GM12878 (cell line): ENCODE measurements at regions of chr1 and their contacts with region 1.

Region 1: DNA sequence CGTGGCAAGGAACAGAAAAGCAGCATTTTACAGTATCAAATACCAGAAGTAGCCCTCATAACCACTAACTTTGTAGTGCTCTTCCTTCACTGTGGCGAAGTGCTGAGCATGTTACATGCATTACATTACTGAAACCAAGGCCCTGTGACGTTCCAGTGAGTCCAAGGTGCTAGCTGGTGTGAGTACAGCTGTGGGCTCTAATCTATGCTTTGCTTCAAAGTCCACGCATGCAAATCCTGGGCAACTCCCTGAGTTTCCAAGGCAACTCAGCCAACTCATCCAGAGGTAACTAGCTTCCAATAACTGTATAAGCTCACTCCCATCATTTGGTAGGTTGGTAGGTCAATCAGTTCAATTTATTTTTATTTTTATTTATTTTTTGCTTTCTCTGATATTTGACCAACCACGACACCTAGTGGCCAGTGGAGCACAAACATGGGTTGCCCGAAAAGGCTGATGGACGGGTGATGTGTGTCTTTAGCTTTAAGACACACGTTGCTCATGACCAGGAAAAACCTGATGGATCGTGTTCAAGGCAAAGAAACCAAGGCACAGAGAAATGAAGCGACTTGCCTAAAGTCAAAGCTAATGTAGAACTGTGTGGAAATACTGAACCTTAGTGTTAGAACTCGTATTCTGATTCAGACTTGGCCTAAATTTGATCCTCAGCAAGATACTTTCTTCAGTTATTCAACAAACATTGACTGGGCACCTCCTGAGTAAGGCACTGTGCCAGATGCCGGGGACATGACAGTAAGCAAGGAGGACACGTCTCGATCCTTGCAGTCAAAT is 73.0 kb downstream of the GNG12 start:
- DNase-seq: peak; percentile 90
- ATAC-seq: peak; percentile 98
- H3K4me3 ChIP-seq: no peak overlapping the region
- H3K27ac ChIP-seq: peak overlapping the region; percentile 84
- H3K4me1 ChIP-seq: peaks cover 15% of the 10 kb centered on the region
- H3K27me3 ChIP-seq: peaks cover 0 to 3% of the 10 kb centered on the region in 2 experiments; a peak in 2 of 4 replicates
- CTCF ChIP-seq: peak; percentile 70 to 84 (median 81); a peak in 5 of 6 replicates
- EP300 ChIP-seq: peak; percentile 96 to 99; a peak in 3 of 4 replicates
- POLR2A ChIP-seq: no peak
- RAD21 ChIP-seq: peak; percentile 85

Region 2: GRCh38 chr1:67261680-67262079 is 498.5 kb before region 1 on chr1:
- CTCF ChIA-PET with region 1: no interaction called
- POLR2A ChIA-PET with region 1: no interaction called
- RAD21 ChIA-PET with region 1: no interaction called
- SMC1A ChIA-PET with region 1: no interaction called
- in situ Hi-C with region 1: no loop called
- intact Hi-C with region 1: no loop called
- DNase-seq: no peak
- ATAC-seq: peak; percentile 45; the same call in 1 of the 3 replicates
- H3K4me3 ChIP-seq: no peak overlapping the region
- H3K27ac ChIP-seq: no peak overlapping the region
- H3K4me1 ChIP-seq: no peaks in the 10 kb centered on the region
- H3K27me3 ChIP-seq: no peaks in the 10 kb centered on the region
- CTCF ChIP-seq: peak in 2 of 3 experiments; percentile 17 to 30; a peak in 2 of 6 replicates
- EP300 ChIP-seq: no peak
- POLR2A ChIP-seq: no peak
- RAD21 ChIP-seq: 0 out of 2 replicates have a peak, but pooled peaks have one; percentile 8

Region 3: GRCh38 chr1:67500413-67500959 is 259.7 kb before region 1 on chr1:
- CTCF ChIA-PET with region 1: interaction called, 10 read pairs
- POLR2A ChIA-PET with region 1: no interaction called
- RAD21 ChIA-PET with region 1: interaction called, 10 read pairs
- SMC1A ChIA-PET with region 1: interaction called, 4 read pairs
- in situ Hi-C with region 1: no loop called
- intact Hi-C with region 1: no loop called
- DNase-seq: peak; percentile 55
- ATAC-seq: peak; percentile 100
- H3K4me3 ChIP-seq: no peak overlapping the region
- H3K27ac ChIP-seq: no peak overlapping the region
- H3K4me1 ChIP-seq: peaks cover 3% of the 10 kb centered on the region; the same call in 1 of the 2 replicates
- H3K27me3 ChIP-seq: 0 out of 4 replicates have a peak, but pooled peaks cover 0 to 2% of the 10 kb centered on the region in 2 experiments
- CTCF ChIP-seq: peak; percentile 97 to 99 (median 99); a peak in 5 of 6 replicates
- EP300 ChIP-seq: no peak
- POLR2A ChIP-seq: no peak
- RAD21 ChIP-seq: peak; percentile 100

Region 4: GRCh38 chr1:67608661-67609571 is 151.3 kb before region 1 on chr1:
- CTCF ChIA-PET with region 1: interaction called, 15 read pairs
- POLR2A ChIA-PET with region 1: no interaction called
- RAD21 ChIA-PET with region 1: interaction called, 18 read pairs
- SMC1A ChIA-PET with region 1: interaction called, 7 read pairs
- in situ Hi-C with region 1: no loop called
- intact Hi-C with region 1: no loop called
- DNase-seq: peak; percentile 5
- ATAC-seq: peak; percentile 45
- H3K4me3 ChIP-seq: no peak overlapping the region
- H3K27ac ChIP-seq: no peak overlapping the region
- H3K4me1 ChIP-seq: no peaks in the 10 kb centered on the region
- H3K27me3 ChIP-seq: no peaks in the 10 kb centered on the region
- CTCF ChIP-seq: no peak
- EP300 ChIP-seq: no peak
- POLR2A ChIP-seq: no peak
- RAD21 ChIP-seq: no peak

Region 5: DNA sequence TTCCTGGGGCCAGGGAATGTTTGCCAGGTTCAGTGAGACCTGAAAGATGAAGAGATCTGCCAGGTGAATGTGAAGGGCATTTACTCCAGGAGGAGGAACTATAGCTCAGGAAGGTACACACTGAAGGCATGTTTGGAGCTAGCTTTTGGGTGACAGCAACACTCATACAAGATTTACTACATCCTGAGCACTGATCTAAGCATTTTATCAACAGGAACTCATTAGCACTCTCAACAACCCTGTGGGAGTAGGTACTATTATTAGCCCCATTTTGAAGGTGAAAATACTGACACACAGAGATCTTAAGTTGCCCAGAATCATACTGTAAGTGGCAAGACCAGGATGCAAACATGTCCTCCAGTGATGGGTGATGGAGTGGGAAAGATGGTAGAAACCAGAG is 68.5 kb before region 1 on chr1:
- CTCF ChIA-PET with region 1: interaction called, 107 read pairs
- POLR2A ChIA-PET with region 1: interaction called, 33 read pairs
- RAD21 ChIA-PET with region 1: interaction called, 225 read pairs
- SMC1A ChIA-PET with region 1: interaction called, 197 read pairs
- in situ Hi-C with region 1: no loop called
- intact Hi-C with region 1: loop called (anchors 1 kb)
- DNase-seq: no peak
- ATAC-seq: no peak
- H3K4me3 ChIP-seq: no peak overlapping the region
- H3K27ac ChIP-seq: no peak overlapping the region
- H3K4me1 ChIP-seq: peaks cover 4% of the 10 kb centered on the region; the same call in 1 of the 2 replicates
- H3K27me3 ChIP-seq: no peaks in the 10 kb centered on the region
- CTCF ChIP-seq: no peak
- EP300 ChIP-seq: no peak
- POLR2A ChIP-seq: no peak
- RAD21 ChIP-seq: no peak

Region 6: GRCh38 chr1:67735806-67736627 is 24.2 kb before region 1 on chr1:
- CTCF ChIA-PET with region 1: interaction called, 40 read pairs
- POLR2A ChIA-PET with region 1: interaction called, 5 read pairs
- RAD21 ChIA-PET with region 1: interaction called, 14 read pairs
- SMC1A ChIA-PET with region 1: interaction called, 227 read pairs
- in situ Hi-C with region 1: no loop called
- intact Hi-C with region 1: loop called (anchors 2 kb)
- DNase-seq: peak; percentile 64
- ATAC-seq: peak; percentile 95
- H3K4me3 ChIP-seq: peak overlapping the region; percentile 42
- H3K27ac ChIP-seq: peak overlapping the region; percentile 79
- H3K4me1 ChIP-seq: peaks cover 35% of the 10 kb centered on the region
- H3K27me3 ChIP-seq: no peaks in the 10 kb centered on the region
- CTCF ChIP-seq: no peak
- EP300 ChIP-seq: peak in 1 of 2 experiments; percentile 35; a peak in 2 of 4 replicates
- POLR2A ChIP-seq: peak; percentile 76
- RAD21 ChIP-seq: no peak

Region 7: DNA sequence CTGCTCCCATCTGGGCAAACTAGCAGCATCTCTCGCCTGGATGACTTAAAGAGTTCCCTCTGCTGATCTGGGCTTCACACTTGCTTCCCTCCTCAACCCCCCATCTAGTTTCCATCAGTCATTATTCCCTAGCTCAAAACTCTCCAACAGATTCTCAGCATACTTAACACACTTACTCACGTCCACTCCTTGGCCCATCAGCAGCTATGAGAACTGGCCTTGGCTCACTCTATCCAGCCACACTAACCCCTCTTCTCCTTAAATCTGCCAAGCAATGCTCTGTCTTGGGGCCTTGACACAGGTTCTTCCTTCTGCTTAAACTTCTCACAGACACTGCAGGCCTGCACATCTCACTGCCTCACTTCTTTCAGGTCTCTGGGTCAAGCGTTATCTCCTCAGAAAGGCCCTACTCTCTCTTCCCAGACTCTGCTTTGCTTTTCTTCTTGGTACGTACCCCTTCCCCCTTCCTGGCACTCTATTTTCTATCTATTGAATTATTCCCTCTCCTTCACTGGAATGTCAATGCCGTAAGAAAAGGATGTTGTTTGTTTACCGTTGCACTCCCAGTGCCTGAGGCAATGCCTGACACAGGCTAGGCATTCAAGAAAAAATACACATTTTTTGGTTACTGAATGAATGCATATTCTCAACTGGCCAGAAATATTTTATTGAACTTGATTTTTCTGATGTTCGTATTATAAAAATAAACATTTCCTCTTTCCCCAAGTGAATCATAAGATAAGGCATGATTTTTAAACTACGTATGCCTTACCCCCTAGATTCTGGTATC is 31.7 kb after region 1 on chr1:
- CTCF ChIA-PET with region 1: interaction called, 16 read pairs
- POLR2A ChIA-PET with region 1: interaction called, 6 read pairs
- RAD21 ChIA-PET with region 1: interaction called, 73 read pairs
- SMC1A ChIA-PET with region 1: interaction called, 232 read pairs
- in situ Hi-C with region 1: no loop called
- intact Hi-C with region 1: no loop called
- DNase-seq: no peak
- ATAC-seq: no peak
- H3K4me3 ChIP-seq: no peak overlapping the region
- H3K27ac ChIP-seq: no peak overlapping the region
- H3K4me1 ChIP-seq: no peaks in the 10 kb centered on the region
- H3K27me3 ChIP-seq: no peaks in the 10 kb centered on the region; a peak in 2 of 4 replicates
- CTCF ChIP-seq: no peak
- EP300 ChIP-seq: no peak
- POLR2A ChIP-seq: no peak
- RAD21 ChIP-seq: no peak

Region 8: GRCh38 chr1:67838180-67838910 is 78.1 kb after region 1 on chr1:
- CTCF ChIA-PET with region 1: interaction called, 315 read pairs
- POLR2A ChIA-PET with region 1: interaction called, 3 read pairs
- RAD21 ChIA-PET with region 1: interaction called, 320 read pairs
- SMC1A ChIA-PET with region 1: interaction called, 1,058 read pairs
- in situ Hi-C with region 1: no loop called
- intact Hi-C with region 1: no loop called
- DNase-seq: no peak
- ATAC-seq: peak; percentile 16; the same call in 1 of the 3 replicates
- H3K4me3 ChIP-seq: no peak overlapping the region
- H3K27ac ChIP-seq: no peak overlapping the region
- H3K4me1 ChIP-seq: no peaks in the 10 kb centered on the region
- H3K27me3 ChIP-seq: peaks cover 0 to 3% of the 10 kb centered on the region in 2 experiments; a peak in 2 of 4 replicates
- CTCF ChIP-seq: no peak
- EP300 ChIP-seq: no peak
- POLR2A ChIP-seq: no peak
- RAD21 ChIP-seq: no peak

Region 9: GRCh38 chr1:67869233-67869632 is 109.0 kb after region 1 on chr1:
- CTCF ChIA-PET with region 1: no interaction called
- POLR2A ChIA-PET with region 1: no interaction called
- RAD21 ChIA-PET with region 1: no interaction called
- SMC1A ChIA-PET with region 1: no interaction called
- in situ Hi-C with region 1: no loop called
- intact Hi-C with region 1: no loop called
- DNase-seq: no peak
- ATAC-seq: no peak
- H3K4me3 ChIP-seq: no peak overlapping the region
- H3K27ac ChIP-seq: no peak overlapping the region
- H3K4me1 ChIP-seq: no peaks in the 10 kb centered on the region
- H3K27me3 ChIP-seq: no peaks in the 10 kb centered on the region; a peak in 1 of 4 replicates
- CTCF ChIP-seq: no peak
- EP300 ChIP-seq: no peak
- POLR2A ChIP-seq: no peak
- RAD21 ChIP-seq: no peak

Region 10: DNA sequence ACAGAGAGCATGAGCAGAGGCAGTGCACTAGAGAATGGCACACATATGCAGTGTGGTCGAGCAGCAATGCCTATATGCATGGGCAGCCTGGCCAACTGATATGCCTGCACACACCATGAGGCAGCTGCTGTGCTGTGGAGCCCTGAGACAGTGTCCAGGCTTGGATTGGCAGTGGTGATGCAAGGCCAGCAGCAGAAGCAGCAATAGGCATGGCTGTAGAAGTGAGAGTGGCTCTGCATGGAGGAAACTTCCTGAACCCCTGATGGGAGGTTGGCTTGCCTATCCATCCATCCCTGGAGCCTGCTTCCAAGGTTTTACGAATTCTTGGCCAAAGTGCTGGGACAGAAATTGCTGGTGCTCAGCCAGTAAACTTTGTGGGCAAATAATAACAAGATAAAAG is 200.5 kb after region 1 on chr1:
- CTCF ChIA-PET with region 1: no interaction called
- POLR2A ChIA-PET with region 1: no interaction called
- RAD21 ChIA-PET with region 1: no interaction called
- SMC1A ChIA-PET with region 1: no interaction called
- in situ Hi-C with region 1: no loop called
- intact Hi-C with region 1: no loop called
- DNase-seq: no peak
- ATAC-seq: no peak
- H3K4me3 ChIP-seq: no peak overlapping the region
- H3K27ac ChIP-seq: no peak overlapping the region
- H3K4me1 ChIP-seq: no peaks in the 10 kb centered on the region
- H3K27me3 ChIP-seq: no peaks in the 10 kb centered on the region
- CTCF ChIP-seq: no peak
- EP300 ChIP-seq: no peak
- POLR2A ChIP-seq: no peak
- RAD21 ChIP-seq: no peak